CD4-positive, alpha-beta memory T cell (primary cell): ENCODE measurements at regions of chr1 and their contacts with region 1.

Region 1: DNA sequence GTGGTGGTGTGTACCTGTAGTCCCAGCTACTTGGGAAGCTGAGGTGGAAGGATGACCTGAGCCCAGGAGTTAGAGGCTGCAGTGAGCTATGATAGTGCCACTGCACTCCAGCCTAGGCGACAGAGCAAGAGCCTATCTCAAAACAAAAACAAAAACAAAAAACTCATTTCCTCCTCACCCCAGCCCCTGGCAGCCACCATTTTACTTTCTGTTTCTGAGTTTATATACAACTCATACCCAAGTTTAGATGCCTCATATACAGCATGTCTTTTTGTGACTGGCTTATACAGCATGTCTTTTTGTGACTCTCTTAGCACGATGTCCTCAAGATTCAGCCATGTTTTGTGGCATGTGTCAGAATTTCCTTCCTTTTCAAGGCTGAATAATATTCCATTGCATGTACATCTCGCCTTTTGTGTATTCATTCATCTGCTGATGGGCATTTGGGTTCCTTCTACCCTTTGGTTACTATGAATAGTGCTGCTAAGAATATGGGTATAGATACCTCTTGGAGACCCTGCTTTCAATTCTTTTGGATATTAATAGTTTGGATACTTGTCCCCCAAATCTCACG is 14.7 kb downstream of the COA7 start:
- DNase-seq: no peak
- H3K4me3 ChIP-seq: no peak overlapping the region
- H3K4me3 Mint-ChIP-seq: no peak overlapping the region
- H3K27ac ChIP-seq: no peak overlapping the region
- H3K27ac Mint-ChIP-seq: peak overlapping the region in 3 of 7 donors; percentile 1 to 75 (median 30)
- H3K4me1 ChIP-seq: peaks cover 8% of the 10 kb centered on the region
- H3K4me1 Mint-ChIP-seq: peaks cover 5 to 23% (median 8%) of the 10 kb centered on the region in 4 donors
- H3K27me3 ChIP-seq: no peaks in the 10 kb centered on the region
- H3K27me3 Mint-ChIP-seq: no peaks in the 10 kb centered on the region

Region 2: DNA sequence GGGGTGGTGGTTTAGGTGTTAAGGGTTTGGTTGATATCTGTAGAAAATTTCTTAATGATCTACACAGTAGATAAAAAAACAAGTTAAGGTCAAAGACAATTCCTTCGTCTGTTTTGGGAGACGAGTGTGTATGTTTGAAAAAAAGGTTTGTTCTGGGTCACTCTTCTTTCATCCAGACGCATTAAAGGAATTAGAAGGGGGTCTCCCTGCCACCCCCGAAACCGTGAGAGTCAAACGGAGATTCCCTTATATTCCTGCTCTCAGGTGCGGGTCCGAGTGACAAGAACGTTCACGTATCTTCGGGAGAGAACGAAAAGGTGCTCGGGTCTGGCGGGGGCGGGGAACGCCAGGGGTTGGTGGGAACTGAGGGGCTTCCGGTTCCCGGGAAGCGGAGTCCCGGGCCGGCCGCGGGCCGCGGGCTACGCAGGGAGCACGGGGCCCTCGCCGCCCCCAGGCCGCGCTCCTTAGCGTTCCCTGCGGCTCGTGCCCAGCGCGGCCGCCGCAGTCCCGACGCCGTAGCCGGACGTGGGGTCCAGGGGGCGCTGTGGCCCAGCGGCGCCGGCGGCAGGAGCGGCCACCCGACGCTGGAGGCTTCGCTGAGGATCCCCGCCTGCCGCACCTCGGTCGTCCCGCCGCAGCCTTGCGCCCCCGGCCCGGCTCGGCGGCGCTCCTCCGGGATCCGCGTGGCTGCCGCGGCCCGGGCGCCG is 541.8 kb before region 1 on chr1 and contains the start of gene ZFYVE9:
- CTCF ChIA-PET with region 1: interaction called, 6 read pairs
- POLR2A ChIA-PET with region 1: no interaction called
- intact Hi-C with region 1: loop called (anchors 5 kb)
- DNase-seq: peak; percentile 61 to 76 (median 70)
- H3K4me3 ChIP-seq: peak within 1 kb of the TSS in 1 of 2 donors; percentile 55
- H3K4me3 Mint-ChIP-seq: peak within 1 kb of the TSS; percentile 87 to 94 (median 91)
- H3K27ac ChIP-seq: peak within 1 kb of the TSS; percentile 58
- H3K27ac Mint-ChIP-seq: peak within 1 kb of the TSS; percentile 53 to 94 (median 86)
- H3K4me1 ChIP-seq: peaks cover 43% of the 10 kb centered on the region
- H3K4me1 Mint-ChIP-seq: peaks cover 32 to 40% (median 35%) of the 10 kb centered on the region in 4 donors
- H3K27me3 ChIP-seq: no peaks in the 10 kb centered on the region
- H3K27me3 Mint-ChIP-seq: no peaks in the 10 kb centered on the region
- total RNA-seq, gene ZFYVE9: 11.0 to 12.8 TPM

Region 3: DNA sequence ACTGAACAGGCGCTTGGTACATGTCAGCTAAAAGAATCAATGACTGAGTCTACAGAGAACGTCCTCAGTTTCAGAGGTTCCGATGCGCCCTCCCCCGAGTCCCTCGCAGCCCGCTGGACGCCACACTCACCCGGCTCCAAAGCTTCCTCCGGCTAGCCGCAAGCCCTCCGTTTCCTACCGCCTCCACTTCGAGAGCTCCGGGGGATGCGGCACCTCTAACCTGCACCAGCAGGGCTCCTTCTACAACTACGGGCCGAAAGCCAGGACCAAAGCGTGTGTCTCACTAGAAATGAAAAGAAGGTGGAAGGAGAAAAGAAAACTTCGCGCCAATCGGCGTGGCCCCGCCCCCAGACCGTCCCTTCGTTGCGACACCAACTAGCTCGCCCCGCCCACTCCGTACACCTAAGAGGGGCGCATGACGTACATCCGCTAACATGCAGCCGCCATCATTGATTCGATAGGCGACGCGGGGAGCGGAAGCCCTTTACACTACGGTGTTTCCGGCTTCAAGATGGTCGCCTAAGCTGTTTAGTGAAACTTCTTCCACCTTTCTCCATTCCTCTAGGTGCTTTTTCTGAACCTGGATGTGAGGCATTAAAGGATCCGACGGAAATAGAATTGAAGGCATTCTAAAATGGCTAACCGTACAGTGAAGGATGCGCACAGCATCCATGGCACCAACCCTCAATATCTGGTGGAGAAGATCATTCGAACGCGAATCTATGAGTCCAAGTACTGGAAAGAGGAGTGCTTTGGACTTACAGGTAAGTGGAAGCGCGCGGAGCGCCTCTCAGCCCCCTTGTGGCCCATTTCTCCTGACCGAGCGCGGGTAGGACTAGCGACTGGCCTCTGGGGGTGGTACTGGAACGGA is 279.1 kb before region 1 on chr1 and contains the starts of genes ORC1 and PRPF38A:
- CTCF ChIA-PET with region 1: interaction called, 13 read pairs
- POLR2A ChIA-PET with region 1: interaction called, 7 read pairs
- intact Hi-C with region 1: loop called (anchors 1 kb)
- DNase-seq: peak; percentile 94 to 98 (median 96)
- H3K4me3 ChIP-seq: peak within 1 kb of the TSS; percentile 85 to 88
- H3K4me3 Mint-ChIP-seq: peak within 1 kb of the TSS; percentile 98 to 100 (median 100)
- H3K27ac ChIP-seq: peak within 1 kb of the TSS; percentile 91
- H3K27ac Mint-ChIP-seq: peak within 1 kb of the TSS; percentile 94 to 99 (median 99)
- H3K4me1 ChIP-seq: peaks cover 25% of the 10 kb centered on the region
- H3K4me1 Mint-ChIP-seq: peaks cover 22 to 44% (median 36%) of the 10 kb centered on the region in 4 donors
- H3K27me3 ChIP-seq: no peaks in the 10 kb centered on the region
- H3K27me3 Mint-ChIP-seq: no peaks in the 10 kb centered on the region
- total RNA-seq, gene ORC1: 1.1 to 1.5 TPM
- total RNA-seq, gene PRPF38A: 69.7 to 70.4 TPM

Region 4: DNA sequence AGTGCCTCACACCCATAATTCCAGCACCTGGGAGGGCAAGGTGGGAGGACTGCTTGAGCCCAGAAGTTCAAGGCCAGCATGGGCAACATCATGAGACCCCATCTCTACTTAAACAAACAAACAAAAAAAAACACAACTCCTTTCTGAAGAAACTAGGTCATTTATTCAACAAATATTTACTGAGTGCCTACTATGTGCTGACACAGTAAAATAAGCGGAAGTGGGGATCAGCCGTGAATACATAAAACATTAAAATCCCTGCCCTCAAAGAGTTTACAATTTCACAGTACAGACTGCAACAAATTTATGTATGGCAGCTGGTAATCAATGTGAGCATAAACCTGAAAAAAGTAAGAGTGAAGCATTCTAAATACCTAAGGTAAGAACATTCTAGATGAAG is 195.8 kb before region 1 on chr1:
- CTCF ChIA-PET with region 1: interaction called, 5 read pairs
- POLR2A ChIA-PET with region 1: no interaction called
- intact Hi-C with region 1: loop called (anchors 2 kb)
- DNase-seq: no peak
- H3K4me3 ChIP-seq: no peak overlapping the region
- H3K4me3 Mint-ChIP-seq: peak overlapping the region in 1 of 8 donors; percentile 57
- H3K27ac ChIP-seq: no peak overlapping the region
- H3K27ac Mint-ChIP-seq: peak overlapping the region in 2 of 7 donors; percentile 62 to 67
- H3K4me1 ChIP-seq: no peaks in the 10 kb centered on the region
- H3K4me1 Mint-ChIP-seq: peaks cover 0 to 7% (median 2%) of the 10 kb centered on the region in 4 donors
- H3K27me3 ChIP-seq: no peaks in the 10 kb centered on the region
- H3K27me3 Mint-ChIP-seq: no peaks in the 10 kb centered on the region

Region 5: GRCh38 chr1:52601991-52602855 is 81.2 kb before region 1 on chr1 and contains the start of gene GPX7:
- CTCF ChIA-PET with region 1: no interaction called
- POLR2A ChIA-PET with region 1: no interaction called
- intact Hi-C with region 1: loop called (anchors 10 kb)
- DNase-seq: peak; percentile 61 to 68 (median 65)
- H3K4me3 ChIP-seq: peak within 1 kb of the TSS; percentile 60 to 64
- H3K4me3 Mint-ChIP-seq: peak within 1 kb of the TSS; percentile 89 to 94 (median 92)
- H3K27ac ChIP-seq: peak within 1 kb of the TSS; percentile 69
- H3K27ac Mint-ChIP-seq: peak within 1 kb of the TSS; percentile 89 to 97 (median 94)
- H3K4me1 ChIP-seq: peaks cover 39% of the 10 kb centered on the region
- H3K4me1 Mint-ChIP-seq: peaks cover 38 to 57% (median 47%) of the 10 kb centered on the region in 4 donors
- H3K27me3 ChIP-seq: no peaks in the 10 kb centered on the region
- H3K27me3 Mint-ChIP-seq: no peaks in the 10 kb centered on the region
- total RNA-seq, gene GPX7: 26.3 to 27.5 TPM

Region 6: DNA sequence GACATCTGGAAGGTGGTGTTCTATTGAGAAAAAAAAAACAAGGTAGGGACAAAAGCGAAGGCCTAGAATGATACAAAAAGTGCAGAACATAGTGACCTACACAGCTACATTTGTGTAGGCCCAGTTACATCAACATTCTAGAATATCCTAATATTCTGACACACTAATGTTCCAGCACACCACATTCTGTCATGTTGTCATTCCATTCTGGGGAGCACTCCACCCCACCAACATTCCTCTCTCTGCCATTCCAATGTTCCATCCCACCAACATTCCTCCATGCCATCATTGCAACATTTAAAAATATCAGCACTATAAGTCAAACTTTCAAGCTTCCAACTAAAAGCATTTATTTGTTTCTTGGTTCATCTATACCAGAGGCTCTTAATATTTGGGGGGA is 13.8 kb before region 1 on chr1:
- CTCF ChIA-PET with region 1: interaction called, 21 read pairs
- POLR2A ChIA-PET with region 1: no interaction called
- intact Hi-C with region 1: no loop called
- DNase-seq: no peak
- H3K4me3 ChIP-seq: no peak overlapping the region
- H3K4me3 Mint-ChIP-seq: no peak overlapping the region
- H3K27ac ChIP-seq: no peak overlapping the region
- H3K27ac Mint-ChIP-seq: peak overlapping the region in 1 of 7 donors; percentile 40
- H3K4me1 ChIP-seq: peaks cover 6% of the 10 kb centered on the region
- H3K4me1 Mint-ChIP-seq: peaks cover 4 to 9% (median 6%) of the 10 kb centered on the region in 4 donors
- H3K27me3 ChIP-seq: no peaks in the 10 kb centered on the region
- H3K27me3 Mint-ChIP-seq: no peaks in the 10 kb centered on the region